ENCODE measurements at regions of chr5 and their contacts with region 1.

Region 1: GRCh38 chr5:148912714-148913398 is 86.4 kb downstream of the ADRB2 start:
- DNase-seq: peak; percentile 98
- H3K4me3 Mint-ChIP-seq: peak overlapping the region; percentile 1
- H3K27ac Mint-ChIP-seq: peak overlapping the region; percentile 76
- H3K4me1 Mint-ChIP-seq: peaks cover 68% of the 10 kb centered on the region
- H3K27me3 Mint-ChIP-seq: no peaks in the 10 kb centered on the region
- CTCF ChIP-seq: peak; percentile 75

Region 2: GRCh38 chr5:148684528-148684927 is 228.3 kb before region 1 on chr5:
- CTCF ChIA-PET with region 1: no interaction called
- POLR2A ChIA-PET with region 1: no interaction called
- intact Hi-C with region 1: no loop called
- DNase-seq: peak; percentile 36
- H3K4me3 Mint-ChIP-seq: no peak overlapping the region
- H3K27ac Mint-ChIP-seq: no peak overlapping the region
- H3K4me1 Mint-ChIP-seq: no peaks in the 10 kb centered on the region
- H3K27me3 Mint-ChIP-seq: peaks cover 2% of the 10 kb centered on the region
- CTCF ChIP-seq: no peak

Region 3: GRCh38 chr5:148831590-148832565 is 81.0 kb before region 1 on chr5:
- CTCF ChIA-PET with region 1: interaction called, 67 read pairs
- POLR2A ChIA-PET with region 1: interaction called, 190 read pairs
- intact Hi-C with region 1: loop called (anchors 1 kb)
- DNase-seq: no peak
- H3K4me3 Mint-ChIP-seq: peak overlapping the region; percentile 90
- H3K27ac Mint-ChIP-seq: peak overlapping the region; percentile 69
- H3K4me1 Mint-ChIP-seq: peaks cover 87% of the 10 kb centered on the region
- H3K27me3 Mint-ChIP-seq: no peaks in the 10 kb centered on the region
- CTCF ChIP-seq: no peak

Region 4: DNA sequence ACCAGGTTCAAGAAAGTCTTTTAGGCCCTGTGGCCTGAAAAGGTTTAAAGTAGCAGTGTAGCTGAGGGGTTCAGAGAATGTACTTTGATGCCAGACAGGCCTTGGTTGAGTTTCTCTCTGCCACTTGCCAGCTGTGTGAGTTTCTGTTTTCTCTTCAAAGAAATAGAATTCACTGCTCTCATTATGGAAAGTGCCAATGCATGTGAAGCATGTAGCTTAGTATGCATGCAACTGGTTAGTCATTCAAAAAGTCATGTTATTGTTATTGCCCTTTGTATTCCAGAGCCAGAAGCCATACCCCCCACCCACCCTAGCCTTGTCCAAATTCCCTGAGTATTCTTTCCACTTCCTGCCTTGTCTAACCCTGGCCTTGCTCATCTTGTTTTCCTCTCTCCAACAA is 15.3 kb after region 1 on chr5:
- CTCF ChIA-PET with region 1: interaction called, 12 read pairs
- POLR2A ChIA-PET with region 1: interaction called, 8 read pairs
- intact Hi-C with region 1: no loop called
- DNase-seq: no peak
- H3K4me3 Mint-ChIP-seq: no peak overlapping the region
- H3K27ac Mint-ChIP-seq: no peak overlapping the region
- H3K4me1 Mint-ChIP-seq: peaks cover 11% of the 10 kb centered on the region
- H3K27me3 Mint-ChIP-seq: no peaks in the 10 kb centered on the region
- CTCF ChIP-seq: no peak

Region 5: GRCh38 chr5:148949841-148950470 is 37.1 kb after region 1 on chr5:
- CTCF ChIA-PET with region 1: interaction called, 80 read pairs
- POLR2A ChIA-PET with region 1: interaction called, 89 read pairs
- intact Hi-C with region 1: no loop called
- DNase-seq: peak; percentile 97
- H3K4me3 Mint-ChIP-seq: no peak overlapping the region
- H3K27ac Mint-ChIP-seq: peak overlapping the region; percentile 92
- H3K4me1 Mint-ChIP-seq: peaks cover 17% of the 10 kb centered on the region
- H3K27me3 Mint-ChIP-seq: no peaks in the 10 kb centered on the region
- CTCF ChIP-seq: no peak

Region 6: DNA sequence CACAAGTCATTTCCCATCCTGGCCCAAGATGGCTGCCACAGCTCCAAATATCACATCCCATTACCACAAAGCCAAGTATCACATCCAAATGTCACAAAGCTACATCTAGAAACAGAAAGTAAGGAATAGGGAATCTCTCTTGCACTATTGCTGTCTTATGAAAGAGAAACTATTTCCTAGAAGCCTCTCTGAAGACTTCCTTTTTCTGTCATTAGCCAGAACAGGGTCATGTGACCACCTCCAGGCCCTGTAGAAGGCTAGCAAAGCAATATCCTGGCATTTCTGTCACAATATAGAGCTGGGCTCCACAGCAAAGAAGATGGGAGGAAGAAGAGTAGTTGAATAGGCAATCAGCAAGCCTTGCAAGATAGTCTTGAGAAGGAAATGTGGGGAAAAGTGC is 50.8 kb after region 1 on chr5:
- CTCF ChIA-PET with region 1: interaction called, 201 read pairs
- POLR2A ChIA-PET with region 1: interaction called, 175 read pairs
- intact Hi-C with region 1: loop called (anchors 1 kb)
- DNase-seq: no peak
- H3K4me3 Mint-ChIP-seq: no peak overlapping the region
- H3K27ac Mint-ChIP-seq: peak overlapping the region; percentile 57
- H3K4me1 Mint-ChIP-seq: peaks cover 58% of the 10 kb centered on the region
- H3K27me3 Mint-ChIP-seq: no peaks in the 10 kb centered on the region
- CTCF ChIP-seq: no peak

Region 7: DNA sequence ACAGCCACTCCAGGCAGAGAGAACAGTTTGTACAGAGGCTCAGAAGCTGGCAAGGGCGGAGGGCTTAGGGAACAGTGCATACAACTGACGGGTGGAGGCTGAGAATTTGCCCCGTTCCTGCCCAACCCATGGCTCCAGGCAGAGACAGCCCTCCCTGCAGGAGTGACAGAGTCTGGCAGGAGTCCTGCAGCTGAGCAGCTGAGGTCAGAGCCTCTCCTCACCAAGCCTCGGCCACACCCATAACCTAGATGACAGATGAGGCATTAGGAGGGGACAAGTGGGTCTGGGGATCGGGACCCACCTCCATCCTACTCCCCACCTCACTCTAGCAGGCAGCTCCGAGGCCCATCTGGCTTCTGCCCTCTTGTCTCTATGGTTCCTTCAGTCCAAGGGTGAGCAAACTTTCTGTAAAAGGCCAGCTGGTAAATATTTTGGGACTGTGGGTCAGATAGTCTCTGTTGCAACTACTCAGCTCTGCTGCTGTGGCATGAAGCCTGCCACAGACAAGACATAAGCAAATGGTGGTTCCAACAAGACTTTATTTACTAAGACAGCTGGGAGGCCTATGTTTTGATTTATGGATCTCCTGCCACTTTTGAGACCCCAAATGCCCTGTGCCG is 66.4 kb after region 1 on chr5:
- CTCF ChIA-PET with region 1: interaction called, 76 read pairs
- POLR2A ChIA-PET with region 1: interaction called, 284 read pairs
- intact Hi-C with region 1: no loop called
- DNase-seq: peak; percentile 95
- H3K4me3 Mint-ChIP-seq: peak overlapping the region; percentile 59
- H3K27ac Mint-ChIP-seq: peak overlapping the region; percentile 97
- H3K4me1 Mint-ChIP-seq: peaks cover 70% of the 10 kb centered on the region
- H3K27me3 Mint-ChIP-seq: no peaks in the 10 kb centered on the region
- CTCF ChIP-seq: no peak

Region 8: GRCh38 chr5:148998174-148998797 is 85.4 kb after region 1 on chr5:
- CTCF ChIA-PET with region 1: interaction called, 168 read pairs
- POLR2A ChIA-PET with region 1: interaction called, 221 read pairs
- intact Hi-C with region 1: loop called (anchors 1 kb)
- DNase-seq: peak; percentile 93
- H3K4me3 Mint-ChIP-seq: no peak overlapping the region
- H3K27ac Mint-ChIP-seq: peak overlapping the region; percentile 73
- H3K4me1 Mint-ChIP-seq: peaks cover 60% of the 10 kb centered on the region
- H3K27me3 Mint-ChIP-seq: no peaks in the 10 kb centered on the region
- CTCF ChIP-seq: peak; percentile 79

Measured in MCF 10A (cell line).